Colonic mucosa (tissue), 4 donors: ENCODE measurements at regions of chr1 and their contacts with region 1.

Region 1: DNA sequence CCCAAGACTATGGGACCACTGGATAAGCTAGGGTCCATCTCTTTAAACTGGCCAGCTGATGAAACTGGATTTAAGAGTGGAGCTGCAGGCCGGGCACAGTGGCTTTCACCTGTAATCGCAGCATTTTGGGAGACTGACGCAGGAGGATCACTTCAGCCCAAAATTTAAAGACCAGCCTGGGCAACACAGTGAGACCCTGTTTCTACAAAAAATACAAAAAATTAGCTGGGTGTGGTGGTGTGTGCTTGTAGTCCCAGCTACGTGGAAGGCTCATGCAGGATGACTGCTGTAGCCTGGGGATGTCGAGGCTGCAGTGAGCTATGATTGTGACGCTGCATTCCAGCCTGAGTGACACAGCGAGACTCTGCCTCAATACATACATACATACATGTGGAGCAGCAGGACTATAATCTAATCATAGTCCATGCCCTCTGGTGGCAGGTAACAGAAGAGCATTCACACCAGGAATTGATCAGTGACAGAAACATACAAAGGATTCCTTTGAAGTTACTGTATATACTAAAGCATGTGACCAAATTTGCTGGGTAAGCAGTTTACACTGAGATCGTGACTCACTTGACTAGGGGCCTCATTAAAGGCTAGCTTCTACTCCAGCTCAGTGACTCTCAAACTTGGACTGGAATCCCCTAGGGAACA is 101.5 kb upstream of the SLFNL1 start:
- DNase-seq: peak; percentile 38
- H3K4me3 ChIP-seq: no peak overlapping the region
- H3K27ac ChIP-seq: no peak overlapping the region
- H3K4me1 ChIP-seq: no peaks in the 10 kb centered on the region
- H3K27me3 ChIP-seq: no peaks in the 10 kb centered on the region
- CTCF ChIP-seq: peak; percentile 50

Region 2: DNA sequence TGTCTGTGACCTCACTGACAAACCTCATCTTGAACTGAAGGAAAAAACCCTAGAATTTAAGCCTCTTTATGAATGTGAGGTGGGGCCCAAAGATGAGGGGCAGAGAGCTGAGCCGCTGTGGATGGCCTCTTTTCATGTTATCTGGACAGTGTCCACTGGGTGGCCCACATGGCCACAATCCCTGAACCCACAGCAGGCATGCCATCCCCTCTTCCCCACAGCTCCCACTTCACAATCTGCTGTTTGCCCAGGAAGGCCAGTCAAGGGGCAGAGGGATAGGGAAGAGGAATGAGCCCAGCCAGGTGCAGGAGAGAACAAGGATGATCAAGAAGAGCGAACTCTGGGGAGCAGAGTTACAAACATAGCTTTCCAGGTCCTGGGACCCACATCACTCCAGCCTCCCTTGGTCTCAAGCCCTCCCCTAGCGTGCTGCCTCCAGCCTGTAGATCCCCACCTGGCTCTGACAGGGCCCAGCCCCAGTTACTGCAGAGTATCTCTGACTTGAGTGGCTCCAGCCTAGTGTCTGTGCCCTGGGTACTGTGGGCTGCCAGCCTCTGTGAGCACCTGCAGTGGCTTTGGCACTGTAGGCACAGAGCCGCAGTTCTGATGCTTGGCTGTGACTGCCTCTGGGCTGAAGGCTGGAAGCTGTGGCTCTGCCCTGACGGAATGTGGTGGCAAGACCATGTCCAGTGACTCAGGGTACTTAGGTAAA is 99.5 kb before region 1 on chr1:
- intact Hi-C with region 1: no loop called
- DNase-seq: no peak
- H3K4me3 ChIP-seq: no peak overlapping the region
- H3K27ac ChIP-seq: no peak overlapping the region
- H3K4me1 ChIP-seq: no peaks in the 10 kb centered on the region
- H3K27me3 ChIP-seq: no peaks in the 10 kb centered on the region
- CTCF ChIP-seq: no peak

Region 3: GRCh38 chr1:41038105-41038504 is 84.9 kb before region 1 on chr1:
- intact Hi-C with region 1: loop called (anchors 10 kb)
- DNase-seq: no peak
- H3K4me3 ChIP-seq: no peak overlapping the region
- H3K27ac ChIP-seq: no peak overlapping the region
- H3K4me1 ChIP-seq: no peaks in the 10 kb centered on the region
- H3K27me3 ChIP-seq: no peaks in the 10 kb centered on the region
- CTCF ChIP-seq: no peak

Region 4: GRCh38 chr1:41751804-41752513 is 629.0 kb after region 1 on chr1:
- intact Hi-C with region 1: no loop called
- DNase-seq: no peak
- H3K4me3 ChIP-seq: no peak overlapping the region
- H3K27ac ChIP-seq: no peak overlapping the region
- H3K4me1 ChIP-seq: no peaks in the 10 kb centered on the region
- H3K27me3 ChIP-seq: no peaks in the 10 kb centered on the region
- CTCF ChIP-seq: no peak